Dorsolateral prefrontal cortex (tissue), 120 donors: ENCODE measurements at regions of chrX and their contacts with region 1.

Region 1: GRCh38 chrX:130079824-130080406 is 30.4 kb downstream of the ELF4 start:
- DNase-seq: peak in 8 of 10 donors; percentile 30 to 61 (median 58)
- H3K4me3 ChIP-seq: no peak overlapping the region
- H3K27ac ChIP-seq: no peak overlapping the region
- H3K27me3 ChIP-seq: peaks cover 0 to 56% (median 8%) of the 10 kb centered on the region in 45 donors
- CTCF ChIP-seq: peak; percentile 47 to 84 (median 74)

Region 2: GRCh38 chrX:130190801-130191200 is 110.9 kb after region 1 on chrX:
- intact Hi-C with region 1: loop called (anchors 2 to 5 kb)
- DNase-seq: peak in 1 of 10 donors; percentile 19
- H3K4me3 ChIP-seq: no peak overlapping the region
- H3K27ac ChIP-seq: no peak overlapping the region
- H3K27me3 ChIP-seq: peaks cover 0 to 65% (median 12%) of the 10 kb centered on the region in 45 donors
- CTCF ChIP-seq: no peak

Region 3: GRCh38 chrX:130196466-130196865 is 116.6 kb after region 1 on chrX:
- intact Hi-C with region 1: loop called (anchors 2 to 5 kb)
- DNase-seq: no peak
- H3K4me3 ChIP-seq: no peak overlapping the region
- H3K27ac ChIP-seq: no peak overlapping the region
- H3K27me3 ChIP-seq: peaks cover 0 to 48% (median 7%) of the 10 kb centered on the region in 45 donors
- CTCF ChIP-seq: no peak